Pancreas (tissue), 10 donors: ENCODE measurements at regions of chr5 and their contacts with region 1.

Region 1: GRCh38 chr5:80255732-80256479 is at the start of gene SERINC5:
- DNase-seq: peak; percentile 78 to 93 (median 86)
- ATAC-seq: peak; percentile 82 to 93 (median 92)
- H3K4me3 ChIP-seq: peak within 1 kb of the TSS; percentile 59 to 87 (median 74)
- H3K27ac ChIP-seq: peak within 1 kb of the TSS; percentile 82 to 97 (median 92)
- H3K4me1 ChIP-seq: peaks cover 0 to 16% (median 13%) of the 10 kb centered on the region in 3 donors
- H3K27me3 ChIP-seq: no peaks in the 10 kb centered on the region
- CTCF ChIP-seq: no peak
- total RNA-seq, gene SERINC5: 11.6 to 43.2 (median 15.7) TPM

Region 2: GRCh38 chr5:79636981-79637733 is 618.7 kb before region 1 on chr5:
- intact Hi-C with region 1: no loop called
- DNase-seq: no peak
- ATAC-seq: no peak
- H3K4me3 ChIP-seq: no peak overlapping the region
- H3K27ac ChIP-seq: no peak overlapping the region
- H3K4me1 ChIP-seq: no peaks in the 10 kb centered on the region
- H3K27me3 ChIP-seq: no peaks in the 10 kb centered on the region
- CTCF ChIP-seq: no peak

Region 3: DNA sequence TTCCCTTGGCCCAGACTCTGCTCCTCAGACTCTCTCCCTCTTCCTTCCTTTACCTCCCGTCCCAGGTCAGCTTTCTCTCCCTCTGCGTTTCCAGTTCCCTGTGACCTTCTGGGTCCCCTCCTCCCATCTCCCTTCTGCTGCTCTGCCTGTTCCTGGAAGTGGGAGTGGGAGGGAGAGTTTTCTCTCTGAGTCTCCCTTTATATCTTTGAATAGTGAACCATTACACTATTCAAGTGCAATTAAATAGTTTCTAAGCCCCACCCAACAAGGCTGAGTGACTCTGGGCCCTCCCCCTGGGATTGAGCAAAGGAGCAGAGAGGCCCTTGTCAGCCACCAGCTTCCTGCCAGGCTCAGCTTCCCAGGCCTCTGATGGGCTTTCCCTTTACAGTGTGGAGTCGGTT is 186.0 kb before region 1 on chr5:
- intact Hi-C with region 1: no loop called
- DNase-seq: no peak
- ATAC-seq: peak in 2 of 4 donors; percentile 33 to 45
- H3K4me3 ChIP-seq: no peak overlapping the region
- H3K27ac ChIP-seq: no peak overlapping the region
- H3K4me1 ChIP-seq: no peaks in the 10 kb centered on the region
- H3K27me3 ChIP-seq: no peaks in the 10 kb centered on the region
- CTCF ChIP-seq: no peak

Region 4: GRCh38 chr5:80181618-80182211 is 74.2 kb before region 1 on chr5:
- intact Hi-C with region 1: loop called in 1 of 3 experiments (anchors 10 kb)
- DNase-seq: peak in 4 of 6 donors; percentile 66 to 84 (median 70)
- ATAC-seq: peak; percentile 76 to 86 (median 78)
- H3K4me3 ChIP-seq: no peak overlapping the region
- H3K27ac ChIP-seq: peak overlapping the region; percentile 10 to 76 (median 60)
- H3K4me1 ChIP-seq: peaks cover 21 to 54% (median 51%) of the 10 kb centered on the region in 3 donors
- H3K27me3 ChIP-seq: no peaks in the 10 kb centered on the region
- CTCF ChIP-seq: no peak